ENCODE measurements at regions of chr2 and their contacts with region 1.

Region 1: GRCh38 chr2:181058378-181059269 is 78.2 kb downstream of the UBE2E3 start:
- DNase-seq: peak in 6 of 9 donors; percentile 18 to 54 (median 47)
- ATAC-seq: peak; percentile 66
- H3K4me3 ChIP-seq: no peak overlapping the region
- H3K4me3 Mint-ChIP-seq: no peak overlapping the region
- H3K27ac ChIP-seq: no peak overlapping the region
- H3K27ac Mint-ChIP-seq: no peak overlapping the region
- H3K4me1 ChIP-seq: no peaks in the 10 kb centered on the region
- H3K4me1 Mint-ChIP-seq: peaks cover 2 to 16% (median 13%) of the 10 kb centered on the region in 7 donors
- H3K27me3 ChIP-seq: no peaks in the 10 kb centered on the region
- H3K27me3 Mint-ChIP-seq: no peaks in the 10 kb centered on the region

Region 2: GRCh38 chr2:179842498-179843153 is 1216.0 kb before region 1 on chr2:
- CTCF ChIA-PET with region 1: no interaction called
- POLR2A ChIA-PET with region 1: no interaction called
- intact Hi-C with region 1: loop called in 1 of 2 experiments (anchors 5 kb)
- DNase-seq: no peak
- ATAC-seq: no peak
- H3K4me3 ChIP-seq: no peak overlapping the region
- H3K4me3 Mint-ChIP-seq: no peak overlapping the region
- H3K27ac ChIP-seq: no peak overlapping the region
- H3K27ac Mint-ChIP-seq: no peak overlapping the region
- H3K4me1 ChIP-seq: no peaks in the 10 kb centered on the region
- H3K4me1 Mint-ChIP-seq: peaks cover 0 to 2% (median 0%) of the 10 kb centered on the region in 7 donors
- H3K27me3 ChIP-seq: no peaks in the 10 kb centered on the region
- H3K27me3 Mint-ChIP-seq: peaks cover 8 to 17% (median 10%) of the 10 kb centered on the region in 5 donors

Region 3: DNA sequence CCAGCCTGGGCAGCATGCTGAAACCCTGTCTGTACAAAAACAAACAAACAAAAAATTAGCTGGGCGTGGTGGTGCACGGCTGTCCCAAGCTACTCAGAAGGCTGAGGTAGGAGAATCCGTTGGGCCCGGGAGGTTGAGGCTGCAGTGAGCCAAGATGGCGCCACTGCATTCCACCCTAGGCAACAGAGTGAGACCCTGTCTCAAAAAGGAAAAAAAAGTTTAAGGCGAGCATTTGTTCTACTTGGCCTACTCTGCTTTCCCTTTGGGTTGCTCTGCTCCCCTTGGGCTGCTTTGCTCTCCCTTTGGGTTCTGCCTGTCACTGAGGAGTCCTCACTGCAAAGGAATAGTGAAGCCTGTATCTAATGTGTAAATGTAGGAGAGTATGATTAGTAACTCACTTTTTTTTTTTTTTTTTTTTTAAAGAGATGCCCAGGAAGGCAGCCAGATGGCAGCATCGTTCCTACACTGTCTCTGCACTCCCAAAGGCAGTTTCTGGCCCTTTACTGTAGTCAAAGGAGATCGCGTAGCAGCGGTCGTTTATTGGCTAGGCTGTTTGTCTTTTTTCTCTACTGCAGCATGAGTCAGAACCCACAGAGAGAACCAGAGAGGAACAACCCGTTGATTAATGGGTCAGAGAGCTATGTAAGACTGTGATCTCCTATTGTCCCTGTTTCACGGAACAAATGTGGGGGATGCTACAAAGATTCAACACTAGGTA is 933.2 kb before region 1 on chr2:
- CTCF ChIA-PET with region 1: interaction called, 36 read pairs
- POLR2A ChIA-PET with region 1: no interaction called
- intact Hi-C with region 1: loop called (anchors 1 kb)
- DNase-seq: peak in 7 of 9 donors; percentile 18 to 43 (median 27)
- ATAC-seq: peak; percentile 86
- H3K4me3 ChIP-seq: no peak overlapping the region
- H3K4me3 Mint-ChIP-seq: peak overlapping the region in 4 of 10 donors; percentile 4 to 58 (median 24)
- H3K27ac ChIP-seq: no peak overlapping the region
- H3K27ac Mint-ChIP-seq: no peak overlapping the region
- H3K4me1 ChIP-seq: no peaks in the 10 kb centered on the region
- H3K4me1 Mint-ChIP-seq: peaks cover 0 to 6% (median 3%) of the 10 kb centered on the region in 7 donors
- H3K27me3 ChIP-seq: no peaks in the 10 kb centered on the region
- H3K27me3 Mint-ChIP-seq: peaks cover 0 to 26% (median 13%) of the 10 kb centered on the region in 5 donors

Region 4: DNA sequence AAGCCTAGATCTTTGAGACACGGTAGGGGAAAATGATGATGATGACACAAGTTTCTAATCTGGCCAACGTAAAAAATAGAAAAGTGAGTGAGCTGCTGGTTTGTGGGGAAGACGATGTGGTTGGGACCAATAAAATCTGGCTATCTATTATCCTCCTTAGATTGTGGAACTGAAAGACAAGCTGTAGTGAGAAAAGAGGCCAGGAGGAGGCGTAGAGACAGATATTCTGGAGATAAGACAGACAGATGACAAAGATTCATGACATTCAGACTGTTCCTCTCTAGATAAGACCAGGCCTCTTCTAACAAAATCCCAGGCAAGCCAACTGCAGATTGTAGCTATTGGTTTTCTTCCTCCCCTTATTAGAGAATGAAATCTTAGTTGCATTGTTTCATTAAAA is 454.5 kb before region 1 on chr2:
- CTCF ChIA-PET with region 1: interaction called, 4 read pairs
- POLR2A ChIA-PET with region 1: no interaction called
- intact Hi-C with region 1: loop called (anchors 1 kb)
- DNase-seq: no peak
- ATAC-seq: peak; percentile 34
- H3K4me3 ChIP-seq: no peak overlapping the region
- H3K4me3 Mint-ChIP-seq: no peak overlapping the region
- H3K27ac ChIP-seq: no peak overlapping the region
- H3K27ac Mint-ChIP-seq: no peak overlapping the region
- H3K4me1 ChIP-seq: no peaks in the 10 kb centered on the region
- H3K4me1 Mint-ChIP-seq: no peaks in the 10 kb centered on the region
- H3K27me3 ChIP-seq: no peaks in the 10 kb centered on the region
- H3K27me3 Mint-ChIP-seq: peaks cover 0 to 5% (median 0%) of the 10 kb centered on the region in 5 donors

Region 5: DNA sequence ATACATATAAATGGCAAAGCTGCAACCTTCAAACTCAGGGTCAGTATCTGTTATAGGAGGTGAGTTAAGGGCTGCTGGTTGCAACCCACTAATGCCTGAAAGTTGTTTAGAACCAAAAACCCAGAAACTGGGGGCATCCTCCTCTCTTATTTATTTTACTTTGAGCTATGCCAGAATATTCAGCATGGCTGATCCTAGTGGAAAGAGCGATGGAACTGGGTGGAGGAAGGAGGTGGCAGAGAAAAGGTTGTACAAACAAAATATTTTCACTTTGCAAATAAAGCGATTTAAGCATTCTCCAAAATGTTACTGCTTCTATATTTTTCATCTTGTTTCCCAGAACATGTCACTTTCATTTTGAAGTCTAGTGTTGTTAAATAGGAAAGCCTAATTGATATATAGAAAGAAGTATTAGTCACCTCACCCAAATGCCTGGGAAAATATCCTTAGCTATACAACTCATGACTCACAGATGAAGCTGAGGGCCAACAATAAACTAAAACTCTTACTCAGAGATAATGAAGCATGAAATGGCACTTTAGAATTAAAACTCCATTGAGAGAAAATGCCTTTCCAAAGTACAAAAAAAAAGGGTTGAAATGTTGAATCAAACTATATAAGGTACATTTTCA is 329.6 kb before region 1 on chr2:
- CTCF ChIA-PET with region 1: no interaction called
- POLR2A ChIA-PET with region 1: no interaction called
- intact Hi-C with region 1: loop called in 1 of 2 experiments (anchors 10 kb)
- DNase-seq: no peak
- ATAC-seq: no peak
- H3K4me3 ChIP-seq: no peak overlapping the region
- H3K4me3 Mint-ChIP-seq: no peak overlapping the region
- H3K27ac ChIP-seq: no peak overlapping the region
- H3K27ac Mint-ChIP-seq: no peak overlapping the region
- H3K4me1 ChIP-seq: no peaks in the 10 kb centered on the region
- H3K4me1 Mint-ChIP-seq: no peaks in the 10 kb centered on the region
- H3K27me3 ChIP-seq: no peaks in the 10 kb centered on the region
- H3K27me3 Mint-ChIP-seq: peaks cover 0 to 10% (median 6%) of the 10 kb centered on the region in 5 donors

Region 6: DNA sequence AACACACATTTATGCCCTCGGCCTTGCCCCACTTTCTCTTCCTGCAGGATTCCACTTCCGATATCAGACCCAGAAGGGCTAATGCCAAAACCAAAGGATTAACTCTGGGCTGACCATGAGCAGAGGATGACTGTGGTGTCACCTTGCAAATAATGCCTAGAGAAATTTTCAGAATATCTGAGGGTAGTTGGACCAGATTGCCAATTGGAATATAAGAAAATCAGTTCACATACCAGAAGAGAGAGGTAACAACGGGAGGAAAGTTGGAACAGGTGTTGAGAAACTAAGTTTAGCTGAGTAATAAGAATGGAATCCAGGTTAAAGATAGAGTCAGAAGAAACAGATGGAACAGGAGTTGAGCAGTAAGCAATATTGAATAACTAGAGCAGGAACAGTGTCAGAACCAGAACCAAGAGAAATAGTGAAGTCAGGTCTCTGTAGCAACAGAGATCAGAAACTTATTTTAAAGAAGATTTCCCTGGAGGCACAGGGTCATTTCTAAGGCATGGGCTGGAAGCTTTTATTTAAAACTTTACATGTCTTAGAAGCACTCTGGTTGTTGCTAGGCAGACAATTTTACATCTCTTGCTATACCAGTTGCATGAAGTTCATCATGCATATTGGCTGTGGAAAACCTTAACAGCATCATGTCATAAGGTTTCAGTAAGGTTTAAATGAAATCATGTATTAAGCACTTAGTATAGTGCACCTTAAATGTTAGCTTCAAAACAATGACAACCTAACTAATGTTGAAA is 310.7 kb before region 1 on chr2:
- CTCF ChIA-PET with region 1: no interaction called
- POLR2A ChIA-PET with region 1: no interaction called
- intact Hi-C with region 1: no loop called
- DNase-seq: no peak
- ATAC-seq: no peak
- H3K4me3 ChIP-seq: no peak overlapping the region
- H3K4me3 Mint-ChIP-seq: no peak overlapping the region
- H3K27ac ChIP-seq: no peak overlapping the region
- H3K27ac Mint-ChIP-seq: no peak overlapping the region
- H3K4me1 ChIP-seq: no peaks in the 10 kb centered on the region
- H3K4me1 Mint-ChIP-seq: no peaks in the 10 kb centered on the region
- H3K27me3 ChIP-seq: no peaks in the 10 kb centered on the region
- H3K27me3 Mint-ChIP-seq: peaks cover 0 to 17% (median 11%) of the 10 kb centered on the region in 5 donors

Region 7: DNA sequence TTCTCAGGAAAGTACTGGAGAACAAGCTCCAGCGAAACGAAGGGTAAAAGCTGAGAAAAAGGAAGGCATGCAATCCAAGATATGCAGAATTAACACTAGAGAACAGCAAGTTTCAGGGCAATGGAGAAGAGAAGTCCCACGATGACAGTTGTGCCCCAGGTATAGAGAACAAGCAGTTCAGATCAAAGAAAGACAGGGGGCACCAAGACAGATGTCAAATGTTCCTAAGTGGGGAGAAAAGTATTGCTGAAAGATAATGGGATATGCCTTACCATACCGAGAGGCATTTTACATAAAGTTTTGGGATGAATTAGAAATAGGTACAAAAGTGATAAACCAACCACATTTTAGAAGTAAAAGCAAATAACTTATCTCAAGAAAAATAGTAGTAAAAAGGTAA is 157.3 kb before region 1 on chr2:
- CTCF ChIA-PET with region 1: interaction called, 3 read pairs
- POLR2A ChIA-PET with region 1: no interaction called
- intact Hi-C with region 1: loop called in 1 of 2 experiments (anchors 2 kb)
- DNase-seq: no peak
- ATAC-seq: no peak
- H3K4me3 ChIP-seq: no peak overlapping the region
- H3K4me3 Mint-ChIP-seq: no peak overlapping the region
- H3K27ac ChIP-seq: no peak overlapping the region
- H3K27ac Mint-ChIP-seq: no peak overlapping the region
- H3K4me1 ChIP-seq: no peaks in the 10 kb centered on the region
- H3K4me1 Mint-ChIP-seq: no peaks in the 10 kb centered on the region
- H3K27me3 ChIP-seq: no peaks in the 10 kb centered on the region
- H3K27me3 Mint-ChIP-seq: peaks cover 13 to 49% (median 27%) of the 10 kb centered on the region in 5 donors